K562 (cell line): ENCODE measurements at regions of chr9 and their contacts with region 1.

Region 1: GRCh38 chr9:37903647-37904444 is at the start of gene SLC25A51:
- DNase-seq: peak; percentile 96 to 99 (median 98)
- ATAC-seq: peak; percentile 90
- H3K4me3 ChIP-seq: peak within 1 kb of the TSS; percentile 86
- H3K27ac ChIP-seq: peak within 1 kb of the TSS; percentile 71
- H3K4me1 ChIP-seq: peaks cover 22 to 32% of the 10 kb centered on the region in 2 experiments
- H3K27me3 ChIP-seq: no peaks in the 10 kb centered on the region
- CTCF ChIP-seq: peak; percentile 95 to 99 (median 98)
- EP300 ChIP-seq: peak; percentile 41
- POLR2A ChIP-seq: peak; percentile 83
- RAD21 ChIP-seq: peak; percentile 80
- polyA plus RNA-seq, gene SLC25A51: 9.1 to 10.6 TPM

Region 2: DNA sequence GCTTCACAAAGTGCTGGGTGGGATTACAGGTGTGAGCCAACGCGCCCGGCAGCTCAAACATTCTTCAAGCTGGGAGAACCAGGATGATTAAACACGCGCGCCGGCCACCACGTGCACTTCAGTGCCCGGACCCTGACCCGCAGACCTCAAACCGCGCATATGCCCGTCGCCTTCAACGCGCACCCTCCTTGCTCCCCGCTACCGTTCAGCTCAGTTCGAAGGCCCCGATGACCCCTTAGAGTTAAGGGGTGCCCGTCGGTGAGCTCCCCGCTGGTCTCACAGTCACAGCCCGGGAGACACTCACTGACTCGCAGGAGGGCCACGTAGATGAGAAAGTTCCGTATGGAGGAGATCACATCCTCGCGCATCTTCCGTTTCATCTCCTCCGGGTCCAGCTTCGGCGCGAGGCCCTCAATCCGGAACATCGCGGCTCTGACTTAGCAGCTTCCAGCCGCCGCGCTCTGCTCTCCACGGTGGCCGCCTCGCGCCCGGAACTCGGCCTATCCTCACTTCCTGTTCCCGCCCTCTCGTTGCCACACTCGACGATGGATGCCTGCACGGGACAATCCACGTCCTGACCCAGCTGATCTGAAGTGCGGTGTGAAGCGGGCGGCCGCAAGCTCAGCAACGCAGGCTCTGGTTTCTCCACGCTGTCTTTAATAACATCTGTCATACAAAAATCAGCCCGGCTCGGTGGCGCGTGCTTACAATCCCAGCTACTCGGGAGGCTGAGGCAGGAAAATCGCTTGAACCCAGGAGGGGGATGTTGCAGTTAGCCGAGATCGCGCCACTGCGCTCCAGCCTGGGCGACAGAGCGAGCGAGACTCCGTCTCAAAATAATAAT is 311.5 kb before region 1 on chr9 and contains the start of gene TOMM5:
- CTCF ChIA-PET with region 1: no interaction called
- POLR2A ChIA-PET with region 1: interaction called, 4 read pairs
- in situ Hi-C with region 1: no loop called
- intact Hi-C with region 1: loop called (anchors 5 kb)
- DNase-seq: peak; percentile 88 to 97 (median 90)
- ATAC-seq: peak; percentile 92
- H3K4me3 ChIP-seq: peak within 1 kb of the TSS; percentile 57
- H3K27ac ChIP-seq: peak within 1 kb of the TSS; percentile 87
- H3K4me1 ChIP-seq: peaks cover 20 to 31% of the 10 kb centered on the region in 2 experiments
- H3K27me3 ChIP-seq: no peaks in the 10 kb centered on the region
- CTCF ChIP-seq: no peak; a peak in 1 of 6 replicates
- EP300 ChIP-seq: peak; percentile 52
- POLR2A ChIP-seq: peak; percentile 99
- RAD21 ChIP-seq: no peak
- polyA plus RNA-seq, gene TOMM5: 1,739 to 1,742 TPM

Region 3: DNA sequence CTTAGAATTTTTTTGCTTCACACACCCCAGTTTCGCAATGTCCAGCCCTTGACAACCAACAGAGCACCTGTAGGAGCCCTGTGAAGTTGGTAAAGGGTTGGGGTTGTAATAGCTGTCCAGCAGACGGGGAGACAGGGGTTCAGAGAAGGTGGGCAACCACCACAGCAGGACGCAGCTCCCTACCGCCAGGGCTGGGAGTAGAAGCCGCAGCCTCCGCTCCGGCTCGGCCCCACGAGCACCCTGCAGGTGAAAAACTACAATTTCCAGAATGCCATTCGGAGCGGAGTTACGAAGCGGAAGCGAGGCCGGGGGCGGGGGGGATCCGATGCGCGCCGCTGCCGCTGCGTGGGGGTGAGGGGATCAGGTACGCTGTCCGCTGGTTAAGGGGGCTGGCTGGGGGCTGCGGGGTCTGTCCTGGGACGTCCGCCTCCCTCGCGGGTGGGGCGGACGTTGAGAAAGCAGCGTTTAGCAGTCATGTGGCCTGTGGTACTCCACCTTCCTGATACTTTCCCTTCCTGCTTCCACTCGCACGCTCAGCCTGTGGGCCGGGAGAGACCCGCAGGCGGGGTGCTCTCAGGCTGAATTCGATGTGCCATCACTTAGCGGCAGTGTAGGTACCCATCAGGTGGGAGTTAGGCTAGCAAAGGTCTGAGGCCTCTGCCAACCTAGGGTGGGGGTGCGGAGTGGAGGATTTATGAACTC is 150.2 kb before region 1 on chr9 and contains the start of gene TRMT10B:
- CTCF ChIA-PET with region 1: no interaction called
- POLR2A ChIA-PET with region 1: no interaction called
- in situ Hi-C with region 1: loop called (anchors 10 kb)
- intact Hi-C with region 1: no loop called
- DNase-seq: peak; percentile 86 to 93 (median 90)
- ATAC-seq: peak; percentile 95
- H3K4me3 ChIP-seq: peak within 1 kb of the TSS; percentile 89
- H3K27ac ChIP-seq: peak within 1 kb of the TSS; percentile 71
- H3K4me1 ChIP-seq: peaks cover 15 to 18% of the 10 kb centered on the region in 2 experiments; a peak in 4 of 5 replicates
- H3K27me3 ChIP-seq: no peaks in the 10 kb centered on the region
- CTCF ChIP-seq: no peak
- EP300 ChIP-seq: no peak
- POLR2A ChIP-seq: peak; percentile 72
- RAD21 ChIP-seq: no peak
- polyA plus RNA-seq, gene TRMT10B: 7.0 to 10.4 TPM

Region 4: GRCh38 chr9:37800631-37801286 is 103.1 kb before region 1 on chr9 and contains the start of gene DCAF10:
- CTCF ChIA-PET with region 1: no interaction called
- POLR2A ChIA-PET with region 1: interaction called, 4 read pairs
- in situ Hi-C with region 1: no loop called
- intact Hi-C with region 1: loop called (anchors 5 kb)
- DNase-seq: peak; percentile 90 to 95 (median 94)
- ATAC-seq: peak; percentile 84
- H3K4me3 ChIP-seq: peak within 1 kb of the TSS; percentile 92
- H3K27ac ChIP-seq: peak within 1 kb of the TSS; percentile 85
- H3K4me1 ChIP-seq: peaks cover 8 to 17% of the 10 kb centered on the region in 2 experiments; a peak in 4 of 5 replicates
- H3K27me3 ChIP-seq: no peaks in the 10 kb centered on the region
- CTCF ChIP-seq: peak in 2 of 3 experiments; percentile 23 to 25; a peak in 2 of 6 replicates
- EP300 ChIP-seq: peak; percentile 72
- POLR2A ChIP-seq: peak; percentile 93
- RAD21 ChIP-seq: peak in 1 of 2 experiments; percentile 18; a peak in 2 of 4 replicates
- polyA plus RNA-seq, gene DCAF10: 6.8 to 7.4 TPM

Region 5: DNA sequence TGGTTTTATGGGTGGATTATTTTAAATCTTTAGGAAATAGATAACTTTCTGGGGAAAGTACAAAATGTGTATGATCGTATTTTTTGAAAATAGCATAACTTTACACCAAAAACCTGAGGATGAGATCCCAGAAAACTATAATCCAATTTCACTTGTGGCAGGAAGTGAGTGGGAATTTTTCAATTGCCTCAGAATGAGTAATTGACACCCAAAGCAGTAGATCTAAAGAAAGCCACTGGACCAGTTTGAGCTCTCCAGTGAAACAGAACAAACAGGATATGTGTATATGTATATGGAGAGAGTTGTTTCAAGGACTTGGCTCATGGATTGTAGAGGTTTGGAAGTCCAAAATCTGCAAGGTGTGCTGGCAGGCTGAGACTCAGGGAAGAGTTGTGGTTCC is 274.4 kb after region 1 on chr9:
- CTCF ChIA-PET with region 1: no interaction called
- POLR2A ChIA-PET with region 1: no interaction called
- in situ Hi-C with region 1: no loop called
- intact Hi-C with region 1: no loop called
- DNase-seq: no peak
- ATAC-seq: no peak
- H3K4me3 ChIP-seq: no peak overlapping the region
- H3K27ac ChIP-seq: no peak overlapping the region
- H3K4me1 ChIP-seq: no peaks in the 10 kb centered on the region; a peak in 1 of 5 replicates
- H3K27me3 ChIP-seq: peaks cover 0 to 30% of the 10 kb centered on the region in 2 experiments; a peak in 2 of 5 replicates
- CTCF ChIP-seq: no peak
- EP300 ChIP-seq: no peak
- POLR2A ChIP-seq: no peak
- RAD21 ChIP-seq: no peak

Region 6: DNA sequence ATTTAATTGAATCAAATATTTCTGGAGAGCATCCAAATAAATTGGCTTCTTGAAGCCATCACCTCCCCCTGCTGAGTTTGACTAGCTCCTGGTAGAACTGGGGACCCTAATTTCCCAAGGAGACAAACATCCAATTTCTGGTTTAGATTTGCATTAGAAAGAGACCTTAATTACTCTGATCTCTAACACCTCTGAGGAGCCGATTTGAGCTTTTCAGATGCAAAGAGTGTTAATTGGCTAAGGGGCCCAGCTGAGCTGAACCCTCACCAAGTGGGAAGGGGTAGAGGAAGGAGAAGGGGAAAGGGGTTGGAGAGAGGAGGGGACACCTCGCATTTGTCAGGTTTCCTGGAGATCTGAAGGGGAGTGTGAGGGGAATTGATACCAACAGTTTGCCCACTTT is 310.6 kb after region 1 on chr9:
- CTCF ChIA-PET with region 1: no interaction called
- POLR2A ChIA-PET with region 1: no interaction called
- in situ Hi-C with region 1: no loop called
- intact Hi-C with region 1: no loop called
- DNase-seq: no peak
- ATAC-seq: no peak
- H3K4me3 ChIP-seq: no peak overlapping the region
- H3K27ac ChIP-seq: no peak overlapping the region
- H3K4me1 ChIP-seq: no peaks in the 10 kb centered on the region; a peak in 1 of 5 replicates
- H3K27me3 ChIP-seq: peaks cover 5 to 11% of the 10 kb centered on the region in 2 experiments; a peak in 3 of 5 replicates
- CTCF ChIP-seq: no peak
- EP300 ChIP-seq: no peak
- POLR2A ChIP-seq: no peak
- RAD21 ChIP-seq: no peak

Region 7: DNA sequence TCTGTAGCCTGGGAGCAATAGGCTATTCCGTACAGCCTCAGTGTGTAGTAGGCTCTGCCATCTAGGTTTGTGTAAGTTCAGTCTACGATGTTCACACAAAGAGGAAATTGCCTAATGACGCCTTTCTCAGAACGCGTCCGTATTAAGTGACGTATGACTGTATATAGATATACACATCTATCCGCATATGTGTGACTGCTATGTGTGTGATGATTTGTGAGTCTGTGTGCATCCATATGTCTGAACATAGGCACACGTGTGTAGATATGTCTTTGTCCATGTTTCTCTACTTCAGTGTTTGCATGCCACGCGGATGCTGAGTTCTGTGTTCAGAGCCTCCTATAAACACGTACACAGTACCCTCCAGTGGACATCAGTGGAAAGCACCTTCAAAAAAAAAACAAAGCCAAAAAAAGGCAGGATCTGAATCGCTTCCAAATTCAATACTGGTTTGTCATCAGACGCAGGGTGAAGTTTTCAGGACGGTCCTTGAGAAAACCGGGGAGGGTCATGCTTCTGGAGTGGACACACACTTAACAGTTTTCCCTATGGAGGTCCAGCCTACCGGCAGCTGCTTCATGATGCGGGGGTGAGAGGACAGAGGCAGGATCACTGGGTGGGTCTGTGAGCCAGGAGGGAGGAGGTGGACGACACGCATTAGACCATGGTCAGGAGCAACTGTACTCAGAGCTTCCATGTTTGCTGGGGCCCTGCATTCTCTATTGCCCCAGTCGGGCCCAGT is 459.2 kb after region 1 on chr9:
- CTCF ChIA-PET with region 1: interaction called, 7 read pairs
- POLR2A ChIA-PET with region 1: no interaction called
- in situ Hi-C with region 1: loop called (anchors 5 kb)
- intact Hi-C with region 1: no loop called
- DNase-seq: peak; percentile 25 to 62 (median 46)
- ATAC-seq: peak; percentile 82
- H3K4me3 ChIP-seq: no peak overlapping the region
- H3K27ac ChIP-seq: no peak overlapping the region
- H3K4me1 ChIP-seq: peaks cover 0 to 4% of the 10 kb centered on the region in 2 experiments; a peak in 2 of 5 replicates
- H3K27me3 ChIP-seq: peaks cover 16 to 27% of the 10 kb centered on the region in 2 experiments
- CTCF ChIP-seq: peak; percentile 69 to 91 (median 86)
- EP300 ChIP-seq: no peak
- POLR2A ChIP-seq: no peak
- RAD21 ChIP-seq: peak; percentile 83 to 88

Region 8: DNA sequence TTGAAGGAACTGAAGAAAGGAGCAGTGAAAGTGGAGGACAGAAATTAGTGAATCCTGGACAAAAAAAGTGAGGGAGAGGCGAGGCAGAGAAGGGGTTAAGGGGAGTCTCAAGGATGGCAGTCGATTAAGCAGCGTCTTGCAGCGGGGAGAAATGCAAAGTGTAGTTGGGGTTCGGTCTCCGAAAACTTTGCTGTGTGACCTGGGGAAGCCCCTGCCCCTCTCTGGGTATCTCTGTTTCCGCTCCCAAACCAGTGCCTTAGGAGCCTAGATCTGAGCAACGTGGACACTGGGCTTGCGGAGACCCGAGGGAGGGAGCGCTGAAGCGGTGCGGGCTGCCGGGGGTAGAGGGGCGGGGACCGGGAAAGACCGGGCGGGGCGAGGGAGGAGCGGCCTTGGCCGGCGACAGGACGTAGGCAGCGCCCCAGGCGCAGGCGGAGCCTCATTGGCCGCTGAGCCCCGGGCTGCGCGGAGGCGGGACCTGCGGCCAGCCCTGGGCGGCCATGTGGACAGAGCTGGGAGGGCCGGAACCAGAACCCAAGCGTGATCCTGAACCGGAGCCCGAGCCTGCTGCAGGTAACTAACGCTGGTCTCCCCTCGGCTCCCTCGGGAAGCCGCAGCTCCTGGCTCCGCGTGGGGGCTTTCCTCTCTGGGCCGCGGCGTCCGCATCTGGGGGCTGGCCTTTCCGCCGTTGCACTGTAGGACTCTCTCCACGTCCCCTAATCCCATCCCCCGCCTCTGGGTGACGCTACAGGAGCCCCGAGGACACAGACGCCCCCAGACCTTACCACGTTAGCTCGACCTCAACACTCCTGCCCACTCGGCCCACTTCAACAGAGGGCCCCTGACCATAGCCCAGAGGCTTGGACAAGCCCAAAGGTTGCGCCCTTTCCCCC is 488.6 kb after region 1 on chr9 and contains the start of gene ALDH1B1:
- CTCF ChIA-PET with region 1: no interaction called
- POLR2A ChIA-PET with region 1: no interaction called
- in situ Hi-C with region 1: no loop called
- intact Hi-C with region 1: loop called (anchors 2 kb)
- DNase-seq: peak; percentile 95 to 99 (median 98)
- ATAC-seq: peak; percentile 99
- H3K4me3 ChIP-seq: peak within 1 kb of the TSS; percentile 83
- H3K27ac ChIP-seq: peak within 1 kb of the TSS; percentile 68
- H3K4me1 ChIP-seq: peaks cover 38 to 47% of the 10 kb centered on the region in 2 experiments
- H3K27me3 ChIP-seq: no peaks in the 10 kb centered on the region
- CTCF ChIP-seq: peak; percentile 45 to 59 (median 55)
- EP300 ChIP-seq: 0 out of 2 replicates have a peak, but pooled peaks have one; percentile 5
- POLR2A ChIP-seq: peak; percentile 89
- RAD21 ChIP-seq: no peak; a peak in 1 of 4 replicates
- polyA plus RNA-seq, gene ALDH1B1: 8.6 to 12.7 TPM